Endothelial cell of umbilical vein (primary cell): ENCODE measurements at regions of chr1 and their contacts with region 1.

Region 1: DNA sequence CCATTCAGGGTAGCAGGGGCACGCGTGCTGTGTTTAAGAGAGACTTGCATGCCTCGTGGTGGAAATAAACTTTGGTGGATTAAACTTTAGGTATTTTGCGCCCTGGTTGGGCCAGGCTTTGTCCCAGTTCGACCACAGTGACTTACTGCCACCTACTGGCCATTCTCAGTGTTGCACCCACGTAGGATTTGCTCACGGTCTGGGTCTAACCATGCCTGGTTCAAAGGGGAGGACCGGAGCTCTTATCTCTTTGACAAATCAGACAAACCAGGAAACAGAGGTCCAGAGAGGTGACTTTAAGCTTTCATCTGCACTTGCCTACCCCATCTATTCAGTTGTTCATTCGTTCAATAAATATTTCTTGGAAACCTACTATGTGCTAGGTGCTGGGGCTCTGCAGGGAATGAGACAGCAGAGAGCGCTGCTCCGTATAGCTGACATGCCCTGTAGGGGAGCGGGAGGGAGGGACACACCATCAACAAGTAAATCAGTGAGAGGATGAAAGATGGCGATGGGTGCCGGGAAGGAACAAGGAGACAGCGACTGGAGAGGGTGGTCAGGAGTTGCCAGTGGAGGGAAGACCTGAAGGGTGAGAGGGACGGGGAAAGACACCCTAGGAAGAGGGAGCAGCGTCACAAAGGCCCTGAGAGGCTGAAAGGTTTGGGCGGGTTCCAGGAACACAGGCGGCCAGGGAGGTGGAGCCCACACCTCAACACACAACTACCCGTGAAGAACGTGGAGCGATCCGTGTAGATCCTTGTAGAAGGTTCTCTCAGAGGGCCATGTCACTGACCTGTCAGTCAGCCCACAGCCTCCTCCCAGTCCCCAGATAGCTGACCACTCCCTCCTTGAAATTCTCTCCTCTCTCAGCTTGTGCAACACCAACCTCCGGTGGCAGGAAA is 27.2 kb upstream of the TINAGL1 start:
- DNase-seq: peak; percentile 88
- H3K4me3 ChIP-seq: peak overlapping the region in 1 of 3 experiments; percentile 20
- H3K27ac ChIP-seq: peak overlapping the region; percentile 4
- H3K4me1 ChIP-seq: peaks cover 13% of the 10 kb centered on the region
- H3K27me3 ChIP-seq: no peaks in the 10 kb centered on the region
- CTCF ChIP-seq: peak; percentile 86 to 95
- POLR2A ChIP-seq: no peak

Region 2: GRCh38 chr1:31182352-31182751 is 366.8 kb before region 1 on chr1:
- CTCF ChIA-PET with region 1: interaction called, 39 read pairs
- POLR2A ChIA-PET with region 1: no interaction called
- dilution Hi-C with region 1: no loop called
- intact Hi-C with region 1: loop called (anchors 1 kb)
- DNase-seq: peak; percentile 68
- H3K4me3 ChIP-seq: no peak overlapping the region
- H3K27ac ChIP-seq: no peak overlapping the region
- H3K4me1 ChIP-seq: no peaks in the 10 kb centered on the region
- H3K27me3 ChIP-seq: peaks cover 3 to 4% of the 10 kb centered on the region in 2 experiments
- CTCF ChIP-seq: peak; percentile 7 to 25
- POLR2A ChIP-seq: no peak

Region 3: GRCh38 chr1:31394628-31395193 is 154.4 kb before region 1 on chr1:
- CTCF ChIA-PET with region 1: interaction called, 50 read pairs
- POLR2A ChIA-PET with region 1: no interaction called
- dilution Hi-C with region 1: no loop called
- intact Hi-C with region 1: loop called (anchors 1 kb)
- DNase-seq: peak; percentile 71
- H3K4me3 ChIP-seq: no peak overlapping the region
- H3K27ac ChIP-seq: no peak overlapping the region
- H3K4me1 ChIP-seq: peaks cover 5% of the 10 kb centered on the region
- H3K27me3 ChIP-seq: no peaks in the 10 kb centered on the region
- CTCF ChIP-seq: peak; percentile 90 to 96
- POLR2A ChIP-seq: no peak

Region 4: DNA sequence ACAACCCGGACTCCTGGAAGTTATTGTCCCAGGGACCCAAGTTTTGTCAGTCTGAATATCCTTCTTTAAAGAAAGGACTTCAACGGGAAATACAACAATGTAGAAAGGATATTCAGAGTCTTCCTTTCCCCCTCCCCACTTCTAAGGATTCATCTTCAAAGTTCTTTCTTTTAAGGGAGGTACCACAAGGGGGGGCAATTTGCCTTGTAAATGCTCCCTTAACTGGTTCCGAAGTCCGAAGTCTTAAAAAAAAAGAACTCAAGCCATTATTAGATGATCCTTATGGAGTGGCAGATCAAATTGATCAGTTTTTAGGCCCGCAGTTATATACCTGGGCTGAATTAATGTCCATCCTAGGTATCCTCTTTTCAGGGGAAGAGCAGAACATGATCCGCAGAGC is 89.1 kb before region 1 on chr1:
- CTCF ChIA-PET with region 1: interaction called, 3 read pairs
- POLR2A ChIA-PET with region 1: no interaction called
- dilution Hi-C with region 1: no loop called
- intact Hi-C with region 1: loop called (anchors 1 kb)
- DNase-seq: no peak
- H3K4me3 ChIP-seq: no peak overlapping the region
- H3K27ac ChIP-seq: no peak overlapping the region
- H3K4me1 ChIP-seq: no peaks in the 10 kb centered on the region
- H3K27me3 ChIP-seq: peaks cover 12 to 14% of the 10 kb centered on the region in 2 experiments
- CTCF ChIP-seq: peak; percentile 4 to 6
- POLR2A ChIP-seq: no peak

Region 5: DNA sequence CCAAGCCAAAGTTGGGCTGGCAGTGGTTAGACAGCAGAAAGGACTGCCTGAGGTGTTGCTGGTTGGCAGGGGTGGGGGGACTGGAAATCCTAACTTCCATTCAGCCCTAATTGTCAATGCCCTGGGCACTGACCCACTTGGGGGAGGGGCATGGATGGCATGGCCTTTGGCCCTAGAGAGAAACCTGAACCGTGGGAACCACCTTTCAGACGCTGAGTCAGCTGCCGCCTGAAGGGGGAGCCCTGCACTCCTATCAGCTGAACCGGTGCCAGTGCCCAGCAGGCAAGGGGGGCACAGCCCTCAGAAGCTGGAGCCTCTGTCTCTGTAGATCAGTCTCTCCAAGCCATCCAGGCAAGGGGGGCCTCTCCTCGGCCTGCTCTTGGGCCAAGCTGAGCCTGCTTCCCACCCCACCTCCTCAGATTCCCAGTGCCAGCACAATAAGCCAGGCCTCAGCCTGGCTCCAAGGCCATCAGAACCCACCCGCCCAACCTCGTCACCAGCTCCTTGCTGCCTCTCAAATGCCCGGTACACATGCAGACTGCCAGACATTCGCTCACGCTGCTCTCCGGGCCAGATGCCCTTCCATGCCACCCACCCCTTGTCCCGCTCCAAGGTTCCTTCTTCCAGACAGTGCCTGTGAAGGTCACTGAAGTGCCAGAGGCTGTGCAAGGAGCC is 38.7 kb after region 1 on chr1:
- CTCF ChIA-PET with region 1: interaction called, 15 read pairs
- POLR2A ChIA-PET with region 1: no interaction called
- dilution Hi-C with region 1: no loop called
- intact Hi-C with region 1: loop called (anchors 1 kb)
- DNase-seq: peak; percentile 86
- H3K4me3 ChIP-seq: no peak overlapping the region
- H3K27ac ChIP-seq: peak overlapping the region; percentile 92
- H3K4me1 ChIP-seq: peaks cover 39% of the 10 kb centered on the region
- H3K27me3 ChIP-seq: no peaks in the 10 kb centered on the region
- CTCF ChIP-seq: peak; percentile 71 to 92
- POLR2A ChIP-seq: peak; percentile 81

Region 6: GRCh38 chr1:31617917-31618660 is 68.9 kb after region 1 on chr1:
- CTCF ChIA-PET with region 1: interaction called, 23 read pairs
- POLR2A ChIA-PET with region 1: no interaction called
- dilution Hi-C with region 1: no loop called
- intact Hi-C with region 1: loop called (anchors 1 kb)
- DNase-seq: peak; percentile 59
- H3K4me3 ChIP-seq: peak overlapping the region; percentile 39 to 58 (median 54)
- H3K27ac ChIP-seq: no peak overlapping the region
- H3K4me1 ChIP-seq: no peaks in the 10 kb centered on the region
- H3K27me3 ChIP-seq: peaks cover 0 to 1% of the 10 kb centered on the region in 2 experiments
- CTCF ChIP-seq: peak; percentile 73 to 97
- POLR2A ChIP-seq: no peak

Region 7: GRCh38 chr1:31663622-31664452 is 114.7 kb after region 1 on chr1:
- CTCF ChIA-PET with region 1: no interaction called
- POLR2A ChIA-PET with region 1: no interaction called
- dilution Hi-C with region 1: no loop called
- intact Hi-C with region 1: no loop called
- DNase-seq: peak; percentile 48
- H3K4me3 ChIP-seq: no peak overlapping the region
- H3K27ac ChIP-seq: no peak overlapping the region
- H3K4me1 ChIP-seq: no peaks in the 10 kb centered on the region
- H3K27me3 ChIP-seq: no peaks in the 10 kb centered on the region
- CTCF ChIP-seq: peak; percentile 86 to 90
- POLR2A ChIP-seq: no peak

Region 8: DNA sequence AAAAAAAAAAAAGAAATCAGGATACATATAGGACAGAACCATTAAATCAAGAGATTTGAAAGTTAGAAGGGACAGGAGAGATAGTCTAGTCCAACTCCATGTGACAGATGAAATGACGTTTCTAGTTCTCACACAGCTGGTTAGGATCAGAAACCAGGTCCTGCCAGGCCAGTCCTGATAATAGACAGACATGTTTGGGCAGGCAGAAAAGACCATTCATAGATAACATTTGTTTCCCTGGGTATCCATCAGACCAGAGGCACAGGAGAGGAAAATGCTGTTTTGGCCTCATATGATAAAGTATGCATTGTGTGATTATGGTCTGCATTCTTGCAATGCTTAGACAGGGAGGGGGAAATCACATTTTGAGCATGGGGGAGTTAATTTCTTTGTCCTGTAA is 945.0 kb after region 1 on chr1:
- CTCF ChIA-PET with region 1: no interaction called
- POLR2A ChIA-PET with region 1: no interaction called
- dilution Hi-C with region 1: no loop called
- intact Hi-C with region 1: no loop called
- DNase-seq: no peak
- H3K4me3 ChIP-seq: no peak overlapping the region
- H3K27ac ChIP-seq: no peak overlapping the region
- H3K4me1 ChIP-seq: peaks cover 7% of the 10 kb centered on the region
- H3K27me3 ChIP-seq: no peaks in the 10 kb centered on the region
- CTCF ChIP-seq: no peak
- POLR2A ChIP-seq: no peak